Heart right ventricle (tissue), 16 donors: ENCODE measurements at regions of chr2 and their contacts with region 1.

Region 1: DNA sequence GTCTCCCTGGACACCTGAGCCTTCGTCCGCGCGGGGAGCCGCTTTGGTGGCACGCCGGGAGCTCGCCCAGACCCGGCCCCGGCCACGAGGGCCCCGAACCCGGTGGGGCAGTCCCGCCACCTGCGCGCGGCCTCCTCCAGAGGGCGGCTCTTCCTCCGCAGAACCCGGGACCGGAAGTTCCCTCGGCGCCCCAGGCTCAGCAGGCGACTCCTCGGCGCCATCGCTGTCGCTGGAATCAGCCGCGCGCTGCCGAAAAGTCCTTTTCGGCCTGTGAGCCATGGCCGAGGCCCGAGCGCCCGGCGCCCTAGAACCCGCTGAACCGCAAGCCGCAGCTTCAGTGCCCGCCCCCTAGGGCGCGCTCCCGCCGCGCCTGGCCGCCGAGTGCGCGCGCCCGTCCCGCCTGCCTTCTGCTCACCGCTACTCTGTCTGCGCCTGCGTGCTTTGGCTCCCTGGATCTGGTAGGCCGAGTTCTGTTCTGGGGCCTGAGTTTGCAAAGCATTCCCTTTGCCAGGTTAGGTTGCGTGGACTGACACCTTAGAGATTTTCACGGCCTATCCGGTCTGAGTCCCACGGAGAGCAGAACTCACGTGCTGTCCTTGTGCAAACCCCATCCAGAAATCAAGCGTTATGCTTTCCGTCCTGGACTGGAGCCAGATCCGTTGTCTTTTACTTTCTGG is at the start of gene GCFC2:
- DNase-seq: peak; percentile 87 to 91
- ATAC-seq: peak; percentile 96 to 99 (median 98)
- H3K4me3 ChIP-seq: peak within 1 kb of the TSS; percentile 52 to 93 (median 81)
- H3K27ac ChIP-seq: peak within 1 kb of the TSS; percentile 83 to 96 (median 92)
- H3K4me1 ChIP-seq: peaks cover 0 to 34% (median 19%) of the 10 kb centered on the region in 9 donors
- H3K27me3 ChIP-seq: no peaks in the 10 kb centered on the region
- CTCF ChIP-seq: peak in 8 of 9 donors; percentile 17 to 68 (median 48)
- total RNA-seq, gene GCFC2: 9.5 to 15.3 (median 12.8) TPM

Region 2: DNA sequence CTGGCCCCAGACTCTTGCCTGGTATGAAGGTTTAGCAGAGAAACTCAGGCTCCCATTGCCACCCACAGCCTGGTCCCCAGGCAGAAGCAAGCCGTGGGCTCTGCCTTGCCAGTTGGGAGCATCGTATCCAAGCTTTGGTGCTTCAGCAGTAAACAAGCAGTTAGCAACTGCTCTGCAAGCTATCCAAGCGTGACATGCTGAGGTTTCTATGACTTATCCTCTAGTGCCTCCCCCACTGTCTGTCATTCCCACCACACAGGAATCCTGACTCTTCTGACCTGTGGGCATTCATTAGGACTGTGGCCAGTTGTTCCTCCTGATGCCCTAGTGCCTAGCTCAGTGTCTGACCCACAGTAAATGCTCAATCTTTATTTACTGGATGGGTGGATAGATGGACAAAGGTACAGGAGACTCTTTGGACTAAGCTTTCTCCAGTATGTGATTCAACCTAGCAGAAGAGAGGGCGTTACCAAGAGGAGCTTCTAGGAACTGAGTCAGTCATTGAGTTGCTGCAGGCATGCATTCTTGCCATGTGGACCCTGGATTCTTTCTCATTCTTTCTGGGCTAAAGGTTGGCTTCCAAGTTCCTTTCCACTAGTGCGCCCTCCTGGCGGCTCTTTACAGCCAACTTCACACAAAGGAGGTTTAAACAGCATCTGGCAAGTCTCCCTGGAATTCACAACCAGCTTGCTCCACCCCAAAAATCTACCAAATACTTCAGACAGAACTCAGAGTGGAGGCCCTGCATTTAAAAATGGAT is 104.8 kb before region 1 on chr2:
- intact Hi-C with region 1: no loop called
- DNase-seq: no peak
- ATAC-seq: no peak
- H3K4me3 ChIP-seq: no peak overlapping the region
- H3K27ac ChIP-seq: no peak overlapping the region
- H3K4me1 ChIP-seq: peaks cover 0 to 9% (median 4%) of the 10 kb centered on the region in 9 donors
- H3K27me3 ChIP-seq: peaks cover 0 to 55% (median 29%) of the 10 kb centered on the region in 7 donors
- CTCF ChIP-seq: no peak

Region 3: GRCh38 chr2:75646583-75647425 is 63.9 kb before region 1 on chr2 and contains the start of gene MRPL19:
- intact Hi-C with region 1: loop called in 1 of 10 experiments (anchors 10 kb)
- DNase-seq: peak; percentile 70 to 95
- ATAC-seq: peak; percentile 99
- H3K4me3 ChIP-seq: peak within 1 kb of the TSS; percentile 52 to 99 (median 89)
- H3K27ac ChIP-seq: peak within 1 kb of the TSS in 9 of 10 donors; percentile 64 to 90 (median 79)
- H3K4me1 ChIP-seq: peaks cover 0 to 29% (median 19%) of the 10 kb centered on the region in 9 donors
- H3K27me3 ChIP-seq: no peaks in the 10 kb centered on the region
- CTCF ChIP-seq: no peak
- total RNA-seq, gene MRPL19: 43.0 to 70.7 (median 64.1) TPM